ENCODE measurements at regions of chr3 and their contacts with region 1.

Region 1: GRCh38 chr3:65439641-65440284 is 599.0 kb downstream of the MAGI1 start:
- DNase-seq: no peak
- H3K4me3 ChIP-seq: no peak overlapping the region
- H3K27ac ChIP-seq: no peak overlapping the region
- H3K4me1 ChIP-seq: peaks cover 0 to 6% (median 4%) of the 10 kb centered on the region in 4 donors
- H3K27me3 ChIP-seq: no peaks in the 10 kb centered on the region
- CTCF ChIP-seq: peak; percentile 49 to 61 (median 58)
- EP300 ChIP-seq: no peak
- POLR2A ChIP-seq: no peak

Region 2: GRCh38 chr3:65672871-65673815 is 233.4 kb after region 1 on chr3:
- intact Hi-C with region 1: loop called (anchors 10 kb)
- DNase-seq: no peak
- H3K4me3 ChIP-seq: no peak overlapping the region
- H3K27ac ChIP-seq: no peak overlapping the region
- H3K4me1 ChIP-seq: no peaks in the 10 kb centered on the region
- H3K27me3 ChIP-seq: no peaks in the 10 kb centered on the region
- CTCF ChIP-seq: peak; percentile 61 to 84 (median 80)
- EP300 ChIP-seq: no peak
- POLR2A ChIP-seq: no peak

Region 3: DNA sequence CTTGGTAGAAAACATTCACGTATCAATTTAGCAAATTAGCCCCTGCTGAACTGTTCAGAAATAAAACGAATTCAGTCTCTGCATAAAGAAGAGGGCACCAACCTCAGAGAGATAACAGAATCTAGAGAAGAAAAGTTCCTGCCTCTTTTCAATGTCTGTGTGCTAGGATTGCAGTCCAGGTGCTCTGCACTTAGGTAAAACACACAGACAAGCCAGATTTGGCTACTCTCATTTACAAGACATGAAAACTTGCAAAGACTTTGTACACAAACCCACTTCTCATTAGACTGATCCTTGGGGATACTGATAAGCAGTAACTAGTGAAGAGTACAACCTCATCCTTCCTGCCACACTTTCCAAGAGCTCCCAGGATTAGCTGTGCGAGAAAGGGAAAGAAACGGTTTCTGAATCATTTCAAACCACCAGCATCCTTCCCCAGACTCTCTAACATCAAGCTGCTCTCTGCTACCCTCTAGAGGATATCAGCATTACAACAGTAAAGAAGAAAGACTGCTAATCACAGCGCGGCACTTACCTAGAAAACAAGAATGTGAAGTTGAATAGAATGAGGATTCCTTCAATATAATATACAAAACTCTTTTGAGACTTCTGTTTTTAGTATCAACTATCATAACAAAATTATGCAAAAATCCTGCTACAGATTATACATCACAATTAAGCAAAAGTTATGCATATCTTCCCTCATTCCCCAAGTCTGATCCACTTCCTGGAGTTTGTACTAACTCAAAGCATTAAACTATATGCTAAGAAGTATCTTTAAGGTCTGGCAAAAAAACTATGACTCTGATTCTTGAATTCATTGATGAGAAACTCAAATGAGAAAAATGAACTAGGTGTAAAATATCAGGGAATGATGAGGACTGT is 292.5 kb after region 1 on chr3:
- intact Hi-C with region 1: loop called (anchors 5 kb)
- DNase-seq: no peak
- H3K4me3 ChIP-seq: no peak overlapping the region
- H3K27ac ChIP-seq: no peak overlapping the region
- H3K4me1 ChIP-seq: peaks cover 16 to 31% (median 24%) of the 10 kb centered on the region in 4 donors
- H3K27me3 ChIP-seq: no peaks in the 10 kb centered on the region
- CTCF ChIP-seq: peak; percentile 66 to 82 (median 70)
- EP300 ChIP-seq: no peak
- POLR2A ChIP-seq: no peak